Right cardiac atrium (tissue), 5 donors: ENCODE measurements at regions of chr5 and their contacts with region 1.

Region 1: DNA sequence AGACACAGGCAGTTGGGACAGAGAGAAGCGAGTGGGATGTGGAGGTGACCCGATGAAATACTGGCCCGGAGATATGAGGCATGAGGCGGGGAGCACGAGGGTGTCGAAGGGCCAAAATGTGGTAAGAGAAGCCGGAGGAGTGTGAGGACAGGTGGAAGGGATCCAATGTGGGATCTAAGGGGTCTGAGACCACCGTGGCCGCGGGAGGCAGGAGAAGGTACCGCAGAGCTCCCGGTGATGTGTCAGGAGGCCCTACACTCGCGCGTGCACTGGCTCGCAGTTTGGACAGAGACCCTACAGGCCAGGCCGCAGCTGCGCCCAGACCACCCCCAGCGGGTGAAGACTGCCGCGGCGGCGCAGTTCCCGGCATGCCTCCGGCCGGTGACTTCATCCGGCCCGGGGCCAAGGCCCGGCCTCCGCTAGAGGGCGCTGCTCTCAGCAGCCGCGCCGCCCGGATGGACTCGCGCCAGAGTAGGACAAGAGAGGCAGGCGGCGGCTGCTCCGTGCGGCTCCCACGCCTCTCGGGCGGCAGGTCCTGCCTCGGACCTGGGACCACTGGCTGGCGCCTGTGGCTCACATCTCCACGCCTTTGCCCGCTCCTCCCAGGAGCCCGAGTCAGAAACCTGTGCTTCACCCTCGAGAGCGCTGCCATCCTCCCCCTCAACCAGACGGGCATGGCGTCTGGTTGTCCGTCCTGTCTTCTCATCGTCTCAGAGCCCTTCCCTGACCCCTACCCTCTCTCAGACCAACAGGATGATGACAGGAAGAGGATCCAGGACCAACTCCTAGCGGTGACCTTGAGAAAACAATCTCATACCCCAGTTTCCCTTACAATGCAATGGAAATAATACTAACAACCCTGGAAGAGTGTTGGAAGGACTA is 35.4 kb upstream of the STING1 start:
- DNase-seq: peak; percentile 91 to 97 (median 97)
- ATAC-seq: peak; percentile 91 to 93
- H3K4me3 ChIP-seq: peak overlapping the region; percentile 45
- H3K27ac ChIP-seq: peak overlapping the region; percentile 94
- H3K4me1 ChIP-seq: no peaks in the 10 kb centered on the region
- H3K27me3 ChIP-seq: no peaks in the 10 kb centered on the region

Region 2: DNA sequence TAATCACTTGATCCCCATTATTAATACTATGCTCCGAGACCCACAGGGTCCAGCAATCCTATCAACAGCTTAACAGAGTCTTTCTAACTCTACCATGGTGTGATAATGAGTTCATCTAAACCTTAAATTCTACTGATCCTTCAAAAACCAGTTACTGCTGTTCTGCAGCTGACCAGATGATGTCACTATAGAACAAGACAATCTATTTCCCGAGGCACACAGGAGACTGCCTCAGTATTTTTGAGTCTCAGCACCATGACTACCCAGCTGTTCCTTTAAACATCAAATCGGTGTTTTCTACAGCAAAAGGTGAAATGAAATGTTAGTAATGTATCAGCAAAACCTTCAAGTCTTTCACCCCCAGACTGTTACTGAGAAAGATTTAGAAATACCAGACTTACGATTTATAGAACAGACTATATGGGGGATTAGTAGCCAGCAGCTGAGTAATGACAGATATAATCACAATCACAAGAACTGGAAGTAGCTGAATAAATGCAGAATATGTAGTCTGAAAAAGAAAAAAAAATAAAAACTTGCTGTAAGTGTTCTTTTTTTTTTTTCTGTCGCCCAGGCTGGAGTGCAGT is 95.5 kb before region 1 on chr5:
- intact Hi-C with region 1: loop called (anchors 1 to 5 kb)
- DNase-seq: no peak
- ATAC-seq: peak; percentile 35 to 58
- H3K4me3 ChIP-seq: no peak overlapping the region
- H3K27ac ChIP-seq: no peak overlapping the region
- H3K4me1 ChIP-seq: peaks cover 3% of the 10 kb centered on the region
- H3K27me3 ChIP-seq: no peaks in the 10 kb centered on the region

Region 3: DNA sequence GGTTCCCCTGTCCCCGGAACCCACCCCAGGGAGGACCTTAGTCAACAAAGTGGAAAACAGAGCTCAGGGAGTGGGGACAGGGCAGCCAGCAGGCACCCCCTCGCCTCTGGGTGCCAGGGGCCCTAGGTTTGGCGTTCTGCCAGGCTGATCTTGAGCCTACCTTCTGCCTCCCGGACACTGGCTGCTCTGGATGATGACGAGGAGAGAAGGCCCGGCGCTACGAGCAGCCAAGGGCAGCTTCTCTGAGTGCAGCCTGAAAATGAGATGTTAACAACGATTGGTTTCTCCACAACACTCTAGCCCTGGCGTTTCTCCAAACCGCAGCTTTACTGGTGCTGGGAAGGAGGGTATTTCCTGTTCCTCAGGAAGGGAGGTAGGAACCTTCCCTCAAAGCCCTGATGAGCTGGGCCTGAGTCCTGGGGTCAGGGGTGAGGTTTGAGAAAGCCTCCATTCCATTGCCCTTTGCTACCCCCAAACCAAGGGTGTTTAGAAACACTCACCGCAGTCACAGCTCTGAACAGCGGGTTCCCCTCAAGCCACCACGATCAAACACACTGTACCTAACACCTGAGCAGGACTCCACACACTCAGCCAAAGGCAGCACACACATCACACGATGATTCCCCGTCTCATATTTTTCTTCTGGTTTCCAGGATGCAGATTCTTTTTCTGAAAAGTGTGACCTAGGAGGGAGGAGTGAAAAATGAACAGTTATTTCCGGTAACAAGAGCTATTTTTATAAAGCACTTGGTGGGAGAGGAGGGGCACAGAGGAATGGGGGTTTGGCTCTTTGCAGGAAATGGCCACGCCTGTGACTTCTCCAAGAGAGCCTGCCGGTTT is 35.7 kb before region 1 on chr5 and contains the start of gene STING1:
- intact Hi-C with region 1: loop called in 1 of 4 experiments (anchors 5 kb)
- DNase-seq: peak; percentile 89 to 93 (median 90)
- ATAC-seq: peak; percentile 74 to 77
- H3K4me3 ChIP-seq: peak within 1 kb of the TSS; percentile 55
- H3K27ac ChIP-seq: peak within 1 kb of the TSS; percentile 98
- H3K4me1 ChIP-seq: peaks cover 3% of the 10 kb centered on the region
- H3K27me3 ChIP-seq: no peaks in the 10 kb centered on the region
- total RNA-seq, gene STING1: 79.7 to 125 (median 93.8) TPM